Right ventricle myocardium superior (tissue), 1 donor: ENCODE measurements at regions of chr11 and their contacts with region 1.

Region 1: DNA sequence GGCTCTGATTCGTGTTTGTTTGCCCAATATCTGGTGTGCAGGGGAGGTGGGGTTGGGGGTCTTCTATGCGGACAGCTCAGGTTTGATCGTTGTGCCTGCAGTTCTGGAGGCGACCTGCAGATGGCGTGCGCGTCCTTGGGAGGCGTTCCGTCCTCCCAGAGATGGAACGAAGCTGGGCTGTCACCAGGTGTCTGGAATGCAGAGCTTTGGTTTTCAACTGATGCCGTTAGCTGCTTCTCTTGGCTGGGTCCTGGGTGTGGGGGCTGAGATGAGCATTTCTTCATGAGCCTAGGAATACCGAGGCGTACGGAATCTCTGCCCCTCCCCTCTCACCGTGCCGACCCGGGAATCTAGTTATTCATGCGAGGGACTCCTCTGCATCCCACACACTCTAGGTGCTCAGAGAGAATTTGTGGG is 98.6 kb downstream of the CEP164 start:
- DNase-seq: peak; percentile 76
- ATAC-seq: peak; percentile 78

Region 2: DNA sequence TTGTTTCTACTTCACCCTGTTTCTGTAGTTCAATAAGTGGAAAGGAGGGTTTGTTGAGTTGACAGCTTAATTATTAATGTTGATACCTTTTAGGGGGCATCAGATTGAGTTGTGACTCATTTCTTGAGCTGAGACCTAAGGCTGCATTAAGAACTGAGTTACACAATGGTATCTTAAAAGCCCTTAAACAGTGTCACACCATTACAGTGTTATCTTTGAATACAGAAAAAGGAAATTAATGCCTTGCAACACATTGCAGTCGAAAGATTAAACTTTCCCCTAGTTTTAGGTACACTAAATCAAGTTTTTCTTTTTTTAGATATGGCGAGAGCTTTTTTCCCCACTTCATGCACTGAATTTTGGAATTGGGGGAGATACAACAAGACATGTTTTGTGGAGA is 265.5 kb before region 1 on chr11:
- intact Hi-C with region 1: no loop called
- DNase-seq: no peak
- ATAC-seq: no peak

Region 3: DNA sequence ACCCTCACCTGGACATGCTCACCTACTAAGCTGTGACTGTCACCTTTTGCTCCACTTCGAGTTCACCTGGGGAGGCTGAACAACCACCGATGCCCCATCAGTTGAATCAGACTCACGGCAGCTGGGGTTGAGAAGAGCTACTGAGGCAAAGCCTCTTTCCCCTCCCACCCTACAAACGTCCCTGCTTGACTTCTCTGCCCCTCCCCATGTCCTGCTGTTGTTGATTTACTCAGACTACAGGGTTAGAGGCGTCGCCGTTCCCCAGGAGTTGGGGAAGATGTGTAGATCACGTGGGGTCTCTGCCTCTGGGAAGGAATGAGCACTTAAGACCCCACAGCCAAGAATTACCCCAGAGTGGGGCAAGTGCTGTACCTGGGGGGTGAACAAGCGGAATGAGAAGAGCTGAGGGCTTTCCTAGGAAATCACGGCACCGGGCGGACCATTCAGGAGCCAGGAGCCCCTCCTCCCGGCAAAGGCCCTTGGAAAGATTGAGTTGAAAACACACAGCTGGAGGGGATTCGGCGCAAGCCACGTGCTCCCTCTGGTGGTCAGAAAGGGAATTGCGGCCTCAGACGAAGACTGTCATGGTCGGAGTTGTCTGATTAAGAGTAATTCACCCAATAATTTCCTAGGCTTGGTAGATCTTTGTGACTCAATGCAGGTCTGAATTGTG is 391.2 kb after region 1 on chr11:
- intact Hi-C with region 1: loop called (anchors 2 kb)
- DNase-seq: peak; percentile 88
- ATAC-seq: peak; percentile 74